Dorsolateral prefrontal cortex (tissue), 120 donors: ENCODE measurements at regions of chr20 and their contacts with region 1.

Region 1: GRCh38 chr20:35883778-35884540 is 70.3 kb downstream of the SCAND1 start:
- DNase-seq: peak; percentile 53 to 81 (median 78)
- H3K4me3 ChIP-seq: peak overlapping the region in 10 of 59 donors; percentile 9 to 33 (median 18)
- H3K27ac ChIP-seq: peak overlapping the region in 18 of 59 donors; percentile 3 to 57 (median 30)
- H3K27me3 ChIP-seq: no peaks in the 10 kb centered on the region
- CTCF ChIP-seq: peak; percentile 54 to 90 (median 80)

Region 2: DNA sequence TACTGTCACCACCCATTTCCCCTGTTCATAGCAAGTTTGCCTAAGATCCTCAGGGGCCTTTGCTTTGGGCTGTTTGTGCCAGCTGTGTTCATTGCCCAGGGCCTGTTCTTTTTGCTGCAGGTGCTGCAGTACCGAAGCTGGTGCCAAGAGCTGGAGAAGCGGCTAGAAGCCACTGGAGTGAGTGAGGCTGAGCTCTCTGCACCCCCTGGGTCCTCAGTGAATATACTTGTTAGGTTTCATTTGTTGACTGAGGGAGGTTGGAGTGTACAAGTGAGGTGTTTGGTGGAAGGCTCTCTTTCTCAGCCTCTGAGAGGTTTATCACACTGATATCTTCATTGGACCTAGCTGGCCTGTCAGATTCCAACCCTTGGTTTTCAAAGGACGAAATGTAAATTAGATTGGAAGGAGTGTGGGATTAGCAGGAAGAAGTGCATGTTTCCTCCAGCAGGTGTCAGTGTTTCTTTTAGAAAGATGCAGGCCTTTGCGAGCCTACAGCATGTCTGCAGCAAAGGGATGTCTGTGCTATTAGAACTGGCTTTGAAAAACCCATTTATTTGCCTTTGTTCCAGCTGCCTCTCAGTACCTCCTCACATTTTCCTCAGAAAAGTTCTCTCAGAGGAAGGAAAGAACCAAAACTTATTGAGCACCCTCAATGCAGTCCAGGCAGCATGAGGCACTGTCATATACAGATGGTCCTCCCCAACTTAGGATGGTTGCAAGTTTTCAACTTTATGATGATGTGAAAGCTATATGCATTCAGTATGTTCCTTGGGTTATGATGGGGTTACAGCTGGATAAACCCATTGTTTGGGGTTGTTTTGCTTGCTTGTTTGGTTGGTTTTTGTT is 420.3 kb before region 1 on chr20:
- intact Hi-C with region 1: loop called in 1 of 2 experiments (anchors 5 kb)
- DNase-seq: peak in 5 of 10 donors; percentile 50 to 72 (median 55)
- H3K4me3 ChIP-seq: no peak overlapping the region
- H3K27ac ChIP-seq: peak overlapping the region in 5 of 59 donors; percentile 7 to 34 (median 19)
- H3K27me3 ChIP-seq: no peaks in the 10 kb centered on the region
- CTCF ChIP-seq: peak; percentile 61 to 92 (median 83)

Region 3: DNA sequence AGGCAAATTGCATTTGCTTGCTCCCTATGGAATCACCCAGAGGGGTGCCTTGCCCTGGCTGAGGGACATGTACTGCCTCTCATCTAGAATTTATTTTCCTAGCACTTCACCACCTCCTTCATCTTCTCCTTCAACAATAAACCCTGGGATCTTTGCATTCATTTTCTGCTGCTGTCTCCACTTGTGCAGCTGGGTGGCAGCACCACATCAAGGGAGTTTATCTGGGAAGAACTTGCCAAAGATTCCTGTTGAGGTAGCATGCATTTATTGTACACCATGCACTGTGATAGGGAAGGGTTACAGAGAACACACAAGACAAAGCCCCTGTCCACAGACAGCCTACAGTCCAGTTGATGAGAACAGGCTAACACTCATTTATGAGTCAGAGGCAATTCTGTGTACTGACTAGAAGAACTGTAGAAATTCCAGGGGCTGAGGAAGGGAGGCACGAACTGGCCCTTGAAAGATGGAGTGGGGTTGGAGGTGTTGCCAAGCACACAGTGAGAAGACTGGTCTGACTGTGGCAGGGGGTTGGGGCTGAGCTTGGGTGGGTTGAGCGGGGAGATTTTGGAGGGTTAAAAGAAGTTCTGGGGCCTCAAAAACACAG is 372.0 kb before region 1 on chr20:
- intact Hi-C with region 1: loop called in 1 of 2 experiments (anchors 5 kb)
- DNase-seq: peak in 5 of 10 donors; percentile 38 to 63 (median 43)
- H3K4me3 ChIP-seq: no peak overlapping the region
- H3K27ac ChIP-seq: no peak overlapping the region
- H3K27me3 ChIP-seq: no peaks in the 10 kb centered on the region
- CTCF ChIP-seq: peak; percentile 34 to 74 (median 64)

Region 4: GRCh38 chr20:35699127-35699975 is 184.6 kb before region 1 on chr20 and contains the starts of genes NFS1 and ROMO1:
- intact Hi-C with region 1: loop called (anchors 5 to 10 kb)
- DNase-seq: peak; percentile 76 to 92 (median 86)
- H3K4me3 ChIP-seq: peak within 1 kb of the TSS; percentile 71 to 100 (median 94)
- H3K27ac ChIP-seq: peak within 1 kb of the TSS; percentile 25 to 92 (median 83)
- H3K27me3 ChIP-seq: no peaks in the 10 kb centered on the region
- CTCF ChIP-seq: peak in 55 of 56 donors; percentile 16 to 73 (median 54)
- total RNA-seq, gene NFS1: 39.8 to 78.0 (median 57.4) TPM
- total RNA-seq, gene ROMO1: 28.9 to 82.8 (median 51.8) TPM